CD4-positive, alpha-beta T cell (primary cell): ENCODE measurements at regions of chr19 and their contacts with region 1.

Region 1: GRCh38 chr19:35628565-35629331 is at the start of gene RBM42:
- DNase-seq: peak; percentile 89 to 99 (median 95)
- ATAC-seq: peak; percentile 99
- H3K4me3 ChIP-seq: peak within 1 kb of the TSS; percentile 87
- H3K4me3 Mint-ChIP-seq: peak within 1 kb of the TSS; percentile 99
- H3K27ac ChIP-seq: peak within 1 kb of the TSS; percentile 81 to 90
- H3K27ac Mint-ChIP-seq: peak within 1 kb of the TSS; percentile 89
- H3K4me1 ChIP-seq: peaks cover 23% of the 10 kb centered on the region
- H3K4me1 Mint-ChIP-seq: peaks cover 29% of the 10 kb centered on the region
- H3K27me3 ChIP-seq: no peaks in the 10 kb centered on the region
- H3K27me3 Mint-ChIP-seq: no peaks in the 10 kb centered on the region
- CTCF ChIP-seq: no peak
- total RNA-seq, gene RBM42: 45.7 to 48.8 TPM

Region 2: GRCh38 chr19:35476149-35476548 is 152.6 kb before region 1 on chr19:
- CTCF ChIA-PET with region 1: no interaction called
- POLR2A ChIA-PET with region 1: no interaction called
- intact Hi-C with region 1: no loop called
- DNase-seq: peak in 1 of 14 experiments; percentile 8
- ATAC-seq: no peak
- H3K4me3 ChIP-seq: no peak overlapping the region
- H3K4me3 Mint-ChIP-seq: no peak overlapping the region
- H3K27ac ChIP-seq: no peak overlapping the region
- H3K27ac Mint-ChIP-seq: no peak overlapping the region
- H3K4me1 ChIP-seq: no peaks in the 10 kb centered on the region
- H3K4me1 Mint-ChIP-seq: no peaks in the 10 kb centered on the region
- H3K27me3 ChIP-seq: no peaks in the 10 kb centered on the region
- H3K27me3 Mint-ChIP-seq: no peaks in the 10 kb centered on the region
- CTCF ChIP-seq: no peak

Region 3: GRCh38 chr19:35612559-35613321 is 16.0 kb before region 1 on chr19 and contains the start of gene HAUS5:
- CTCF ChIA-PET with region 1: no interaction called
- POLR2A ChIA-PET with region 1: interaction called, 3 read pairs
- intact Hi-C with region 1: loop called (anchors 1 to 2 kb)
- DNase-seq: peak; percentile 89 to 98 (median 95)
- ATAC-seq: peak; percentile 91
- H3K4me3 ChIP-seq: peak within 1 kb of the TSS; percentile 92
- H3K4me3 Mint-ChIP-seq: peak within 1 kb of the TSS; percentile 94
- H3K27ac ChIP-seq: peak within 1 kb of the TSS; percentile 70 to 72
- H3K27ac Mint-ChIP-seq: peak within 1 kb of the TSS; percentile 94
- H3K4me1 ChIP-seq: peaks cover 38% of the 10 kb centered on the region
- H3K4me1 Mint-ChIP-seq: peaks cover 36% of the 10 kb centered on the region
- H3K27me3 ChIP-seq: no peaks in the 10 kb centered on the region
- H3K27me3 Mint-ChIP-seq: no peaks in the 10 kb centered on the region
- CTCF ChIP-seq: no peak
- total RNA-seq, gene HAUS5: 28.4 to 29.9 TPM

Region 4: GRCh38 chr19:35748106-35749020 is 119.6 kb after region 1 on chr19 and contains the start of gene LIN37:
- CTCF ChIA-PET with region 1: no interaction called
- POLR2A ChIA-PET with region 1: no interaction called
- intact Hi-C with region 1: loop called in 1 of 2 experiments (anchors 1 kb)
- DNase-seq: peak; percentile 95 to 100 (median 98)
- ATAC-seq: peak; percentile 70
- H3K4me3 ChIP-seq: peak within 1 kb of the TSS; percentile 94
- H3K4me3 Mint-ChIP-seq: peak within 1 kb of the TSS; percentile 98
- H3K27ac ChIP-seq: peak within 1 kb of the TSS; percentile 61 to 75
- H3K27ac Mint-ChIP-seq: peak within 1 kb of the TSS; percentile 89
- H3K4me1 ChIP-seq: peaks cover 49% of the 10 kb centered on the region
- H3K4me1 Mint-ChIP-seq: peaks cover 37% of the 10 kb centered on the region
- H3K27me3 ChIP-seq: no peaks in the 10 kb centered on the region
- H3K27me3 Mint-ChIP-seq: no peaks in the 10 kb centered on the region
- CTCF ChIP-seq: no peak
- total RNA-seq, gene LIN37: 4.8 to 6.0 TPM